Aorta (tissue), 5 donors: ENCODE measurements at regions of chr6 and their contacts with region 1.

Region 1: DNA sequence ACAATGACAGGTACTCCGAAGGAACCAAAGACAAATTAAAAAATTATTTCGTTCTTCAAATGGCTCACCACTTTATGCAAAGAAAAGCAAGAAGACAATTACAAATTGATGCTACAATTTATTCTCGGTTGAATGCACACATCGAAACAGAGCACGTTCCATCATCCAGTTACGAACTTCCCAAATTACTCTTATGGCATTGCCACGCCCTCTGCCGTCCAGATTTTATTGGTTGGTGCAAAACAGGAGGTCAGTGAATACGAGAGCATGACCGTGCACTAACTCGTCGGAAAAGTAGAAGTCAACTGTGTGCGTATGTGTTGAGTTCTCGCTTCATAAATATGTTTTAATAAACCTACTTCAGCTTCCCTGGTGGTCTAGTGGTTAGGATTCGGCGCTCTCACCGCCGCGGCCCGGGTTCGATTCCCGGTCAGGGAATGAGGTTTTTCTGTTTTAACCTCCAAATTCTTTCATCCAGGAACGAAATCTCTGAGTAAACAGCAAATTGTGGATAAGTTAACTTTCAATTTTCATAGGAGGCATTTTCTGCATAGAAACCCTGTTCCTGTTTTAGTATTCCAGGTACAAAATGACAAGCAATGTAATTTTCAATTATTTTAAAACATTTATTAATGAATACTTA is 23.2 kb downstream of the ZNF311 start:
- DNase-seq: peak; percentile 85 to 90
- ATAC-seq: peak; percentile 94
- H3K4me3 ChIP-seq: peak overlapping the region; percentile 57 to 95
- H3K27ac ChIP-seq: no peak overlapping the region
- H3K4me1 ChIP-seq: peaks cover 0 to 2% of the 10 kb centered on the region in 2 donors
- H3K27me3 ChIP-seq: no peaks in the 10 kb centered on the region

Region 2: DNA sequence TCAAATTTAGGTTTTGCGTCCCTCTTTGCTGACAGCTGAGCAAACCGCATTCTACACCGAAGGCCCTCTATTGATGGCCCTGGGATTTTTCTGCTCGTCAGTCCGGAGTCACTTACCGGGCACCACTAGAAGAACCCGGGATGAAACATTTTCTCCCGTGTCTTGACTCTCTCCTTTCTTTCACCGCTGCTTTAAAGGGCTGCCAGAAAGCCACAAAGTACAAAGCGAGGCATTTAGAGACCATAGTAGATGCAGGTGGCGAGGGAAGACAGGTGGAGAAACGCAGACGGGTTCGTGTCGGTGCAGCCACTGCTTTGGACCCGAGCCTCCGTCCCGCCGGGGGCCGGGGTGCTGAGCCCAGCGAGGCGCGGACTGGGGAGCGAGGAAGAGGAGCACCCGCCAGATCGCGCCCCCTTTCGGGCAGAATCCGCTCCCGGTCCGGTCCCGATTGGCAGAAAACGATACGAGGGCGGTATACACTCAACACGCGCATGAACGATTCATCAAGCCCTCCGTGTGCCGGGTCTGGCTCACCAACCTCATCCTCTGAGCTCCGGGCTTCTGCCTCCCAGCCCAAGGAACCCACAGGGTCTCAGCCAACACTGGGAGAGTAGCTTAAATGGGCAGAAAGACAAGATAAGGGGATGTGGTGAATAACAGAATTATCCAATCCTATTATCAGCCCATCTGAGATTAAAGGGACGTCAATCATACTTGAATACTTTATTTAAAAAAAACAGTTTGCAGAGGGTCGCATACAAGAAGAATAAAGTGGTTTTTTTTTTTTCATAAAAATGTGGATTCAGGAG is 143.1 kb before region 1 on chr6:
- intact Hi-C with region 1: loop called in 1 of 2 experiments (anchors 10 kb)
- DNase-seq: peak; percentile 87 to 94
- ATAC-seq: peak; percentile 93
- H3K4me3 ChIP-seq: peak overlapping the region; percentile 54 to 61
- H3K27ac ChIP-seq: no peak overlapping the region
- H3K4me1 ChIP-seq: no peaks in the 10 kb centered on the region
- H3K27me3 ChIP-seq: no peaks in the 10 kb centered on the region

Region 3: DNA sequence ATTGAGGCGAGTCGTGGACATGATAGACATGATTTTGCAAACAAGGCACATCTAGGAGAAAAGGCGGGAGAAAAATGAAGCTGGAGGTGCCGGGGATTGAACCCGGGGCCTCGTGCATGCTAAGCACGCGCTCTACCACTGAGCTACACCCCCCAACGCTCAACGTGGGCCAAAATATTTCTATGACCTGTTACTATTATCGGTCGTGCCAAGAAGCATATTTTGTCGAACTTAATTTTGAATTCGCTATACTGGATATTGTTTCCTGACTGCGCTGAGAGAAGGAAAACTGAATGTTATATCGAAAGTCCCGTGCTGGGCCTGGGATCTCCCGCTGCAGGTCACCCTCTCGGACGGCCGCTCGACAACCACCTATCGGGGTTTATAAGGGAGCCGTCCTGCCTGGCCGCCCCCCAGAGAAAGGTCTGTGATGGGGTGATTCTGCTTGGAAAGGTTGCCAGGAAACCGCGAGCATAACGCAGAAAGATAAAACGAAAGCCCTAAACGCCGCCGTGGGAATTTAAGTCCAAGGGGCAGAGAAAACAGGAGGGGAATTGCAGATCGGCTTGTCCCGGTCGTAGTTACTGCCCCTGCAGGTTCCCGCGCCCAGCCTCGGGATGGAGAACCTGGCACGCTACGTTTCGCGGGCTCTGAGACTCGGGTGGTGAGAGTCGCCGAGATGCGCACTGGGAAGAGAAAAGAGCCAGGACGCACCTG is 118.2 kb before region 1 on chr6:
- intact Hi-C with region 1: loop called (anchors 2 to 10 kb)
- DNase-seq: peak; percentile 67 to 84
- ATAC-seq: peak; percentile 91
- H3K4me3 ChIP-seq: peak overlapping the region; percentile 60 to 67
- H3K27ac ChIP-seq: peak overlapping the region in 1 of 2 donors; percentile 13
- H3K4me1 ChIP-seq: no peaks in the 10 kb centered on the region
- H3K27me3 ChIP-seq: no peaks in the 10 kb centered on the region

Region 4: DNA sequence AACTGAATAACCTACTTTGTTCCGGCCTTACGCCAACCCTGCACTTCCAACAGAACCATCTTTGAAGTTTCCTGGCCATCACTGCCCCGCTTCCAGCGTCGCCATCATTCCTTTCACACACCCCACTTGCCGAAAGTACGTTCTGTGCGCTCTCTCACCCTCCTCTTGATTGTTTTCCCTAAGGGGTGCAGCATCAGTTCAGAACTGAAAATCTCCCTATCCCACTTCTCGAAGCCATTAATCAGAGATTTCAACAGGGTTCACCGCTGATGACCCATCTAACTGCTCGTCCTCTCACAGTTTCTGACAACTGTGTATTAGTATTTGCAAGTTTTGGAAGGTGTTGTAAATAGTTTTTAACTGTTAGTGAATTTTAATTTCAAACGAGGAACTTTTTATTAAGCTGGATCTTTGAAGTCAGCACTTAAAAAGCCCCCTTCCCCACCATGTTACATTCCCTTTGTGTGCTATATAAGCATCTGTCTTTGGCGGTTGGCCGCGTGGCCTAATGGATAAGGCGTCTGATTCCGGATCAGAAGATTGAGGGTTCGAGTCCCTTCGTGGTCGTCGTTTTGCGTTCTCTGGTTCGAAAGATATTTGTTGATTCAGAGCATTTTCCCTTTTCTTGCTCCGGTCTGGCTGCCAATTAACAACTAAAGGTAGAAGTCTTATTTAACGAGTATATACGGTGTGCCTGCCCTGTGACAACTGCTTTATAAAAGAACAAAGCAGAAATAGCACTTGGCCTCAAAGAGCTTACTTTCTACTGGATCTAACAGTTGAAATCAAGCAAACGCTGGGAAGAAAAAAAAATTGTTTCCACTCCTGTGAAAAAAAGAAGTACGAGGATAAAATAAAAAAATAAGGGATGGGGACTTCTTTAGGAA is 100.8 kb before region 1 on chr6:
- intact Hi-C with region 1: loop called in 1 of 2 experiments (anchors 5 kb)
- DNase-seq: peak; percentile 76 to 88
- ATAC-seq: peak; percentile 89
- H3K4me3 ChIP-seq: peak overlapping the region; percentile 77 to 95
- H3K27ac ChIP-seq: peak overlapping the region in 1 of 2 donors; percentile 39
- H3K4me1 ChIP-seq: peaks cover 0 to 3% of the 10 kb centered on the region in 2 donors
- H3K27me3 ChIP-seq: no peaks in the 10 kb centered on the region

Region 5: GRCh38 chr6:28895134-28895812 is 86.7 kb before region 1 on chr6:
- intact Hi-C with region 1: loop called (anchors 2 kb)
- DNase-seq: peak; percentile 94 to 96
- ATAC-seq: peak; percentile 96
- H3K4me3 ChIP-seq: peak overlapping the region; percentile 52 to 96
- H3K27ac ChIP-seq: peak overlapping the region; percentile 9 to 95
- H3K4me1 ChIP-seq: no peaks in the 10 kb centered on the region
- H3K27me3 ChIP-seq: no peaks in the 10 kb centered on the region